CD8-positive, alpha-beta T cell (primary cell): ENCODE measurements at regions of chr14 and their contacts with region 1.

Region 1: GRCh38 chr14:81193924-81194633 is 26.7 kb downstream of the GTF2A1 start:
- DNase-seq: no peak
- ATAC-seq: peak; percentile 34
- H3K4me3 ChIP-seq: no peak overlapping the region
- H3K4me3 Mint-ChIP-seq: no peak overlapping the region
- H3K27ac ChIP-seq: no peak overlapping the region
- H3K27ac Mint-ChIP-seq: peak overlapping the region; percentile 75
- H3K4me1 ChIP-seq: peaks cover 15% of the 10 kb centered on the region
- H3K4me1 Mint-ChIP-seq: peaks cover 51% of the 10 kb centered on the region
- H3K27me3 ChIP-seq: no peaks in the 10 kb centered on the region
- H3K27me3 Mint-ChIP-seq: no peaks in the 10 kb centered on the region
- CTCF ChIP-seq: no peak

Region 2: GRCh38 chr14:81179631-81180030 is 14.4 kb before region 1 on chr14:
- CTCF ChIA-PET with region 1: interaction called, 3 read pairs
- POLR2A ChIA-PET with region 1: no interaction called
- intact Hi-C with region 1: loop called in 1 of 2 experiments (anchors 2 kb)
- DNase-seq: no peak
- ATAC-seq: no peak
- H3K4me3 ChIP-seq: no peak overlapping the region
- H3K4me3 Mint-ChIP-seq: no peak overlapping the region
- H3K27ac ChIP-seq: no peak overlapping the region
- H3K27ac Mint-ChIP-seq: no peak overlapping the region
- H3K4me1 ChIP-seq: peaks cover 7% of the 10 kb centered on the region
- H3K4me1 Mint-ChIP-seq: peaks cover 28% of the 10 kb centered on the region
- H3K27me3 ChIP-seq: no peaks in the 10 kb centered on the region
- H3K27me3 Mint-ChIP-seq: no peaks in the 10 kb centered on the region
- CTCF ChIP-seq: no peak

Region 3: GRCh38 chr14:81246461-81247145 is 52.5 kb after region 1 on chr14:
- CTCF ChIA-PET with region 1: no interaction called
- POLR2A ChIA-PET with region 1: no interaction called
- intact Hi-C with region 1: no loop called
- DNase-seq: no peak
- ATAC-seq: no peak
- H3K4me3 ChIP-seq: no peak overlapping the region
- H3K4me3 Mint-ChIP-seq: no peak overlapping the region
- H3K27ac ChIP-seq: no peak overlapping the region
- H3K27ac Mint-ChIP-seq: no peak overlapping the region
- H3K4me1 ChIP-seq: no peaks in the 10 kb centered on the region
- H3K4me1 Mint-ChIP-seq: no peaks in the 10 kb centered on the region
- H3K27me3 ChIP-seq: no peaks in the 10 kb centered on the region
- H3K27me3 Mint-ChIP-seq: peaks cover 9% of the 10 kb centered on the region
- CTCF ChIP-seq: no peak